GM23248 (cell line): ENCODE measurements at regions of chr7 and their contacts with region 1.

Region 1: DNA sequence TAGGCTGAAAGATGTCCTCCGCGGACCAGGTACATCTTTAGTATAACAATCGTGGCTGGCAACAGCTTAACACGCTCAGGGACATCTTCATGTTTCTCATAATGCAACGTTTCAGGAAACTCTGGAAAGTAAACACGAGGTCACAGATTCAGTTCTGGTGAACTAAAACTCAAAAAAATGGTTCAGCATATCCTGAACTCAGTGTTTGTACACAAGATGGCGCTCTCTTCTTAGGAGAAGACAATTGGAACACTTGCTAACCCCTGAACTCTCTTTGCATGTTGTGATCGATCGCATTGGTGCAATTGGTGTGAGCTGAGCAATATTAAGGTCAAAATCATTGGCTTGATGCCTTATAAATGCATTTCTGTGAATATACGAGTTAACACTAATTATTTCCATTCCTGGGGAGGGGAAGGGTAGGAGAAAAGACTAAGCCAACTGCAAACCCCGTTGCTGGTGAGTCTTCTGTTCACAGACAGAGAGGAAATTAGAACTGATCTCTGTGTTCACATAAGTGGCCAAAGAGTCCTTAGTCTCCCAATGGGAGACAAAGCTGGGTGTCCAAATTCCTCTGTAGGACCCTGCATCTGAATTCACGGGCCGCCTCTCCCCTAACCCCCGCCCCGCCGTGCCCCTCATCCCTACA is 52.6 kb upstream of the FAM180A start:
- DNase-seq: peak; percentile 83
- H3K4me3 ChIP-seq: 0 out of 2 replicates have a peak overlapping the region, but pooled peaks have one; percentile 31
- H3K27ac ChIP-seq: no peak overlapping the region
- H3K4me1 ChIP-seq: peaks cover 3% of the 10 kb centered on the region
- H3K27me3 ChIP-seq: no peaks in the 10 kb centered on the region

Region 2: DNA sequence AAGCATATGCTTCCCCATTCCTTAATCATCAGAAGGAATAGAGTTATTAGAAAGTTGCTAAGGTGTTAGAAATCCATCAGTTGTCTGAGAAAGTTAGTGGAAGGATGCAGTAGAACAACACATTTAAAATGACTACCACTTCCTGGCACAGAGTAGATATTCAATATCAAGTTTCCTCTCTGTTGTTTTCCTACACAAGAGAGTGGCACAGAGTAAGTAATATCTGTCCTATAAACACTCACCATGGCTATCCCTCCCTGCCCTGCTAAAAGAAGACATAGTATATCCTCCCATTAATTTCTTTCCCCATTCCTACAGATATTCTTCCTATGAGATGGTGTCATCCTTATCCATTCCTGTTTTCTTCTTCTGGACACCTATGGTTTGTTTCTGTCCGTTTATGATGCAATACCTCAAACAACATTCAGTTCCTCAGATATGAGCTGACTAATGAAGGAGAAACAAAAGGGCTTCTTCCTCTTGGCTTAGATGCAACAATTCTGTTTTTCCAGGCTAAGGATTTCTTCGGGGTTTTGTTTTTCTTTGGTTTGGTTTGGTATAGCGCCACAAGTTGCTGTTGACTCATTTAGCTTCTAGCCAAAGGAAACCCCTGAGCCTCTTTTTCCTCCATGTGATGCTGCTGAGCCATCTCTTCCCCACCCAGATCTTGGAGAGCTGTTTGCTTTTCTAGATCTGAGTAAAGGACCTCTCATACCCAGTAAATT is 1187.4 kb before region 1 on chr7:
- in situ Hi-C with region 1: no loop called
- DNase-seq: peak; percentile 97
- H3K4me3 ChIP-seq: peak overlapping the region; percentile 32
- H3K27ac ChIP-seq: peak overlapping the region; percentile 97
- H3K4me1 ChIP-seq: peaks cover 29% of the 10 kb centered on the region
- H3K27me3 ChIP-seq: no peaks in the 10 kb centered on the region

Region 3: GRCh38 chr7:135320277-135320676 is 480.9 kb before region 1 on chr7:
- in situ Hi-C with region 1: no loop called
- DNase-seq: peak; percentile 33
- H3K4me3 ChIP-seq: no peak overlapping the region
- H3K27ac ChIP-seq: no peak overlapping the region
- H3K4me1 ChIP-seq: no peaks in the 10 kb centered on the region
- H3K27me3 ChIP-seq: no peaks in the 10 kb centered on the region

Region 4: GRCh38 chr7:135597926-135598305 is 203.3 kb before region 1 on chr7:
- in situ Hi-C with region 1: no loop called
- DNase-seq: peak; percentile 58
- H3K4me3 ChIP-seq: no peak overlapping the region
- H3K27ac ChIP-seq: no peak overlapping the region
- H3K4me1 ChIP-seq: peaks cover 13% of the 10 kb centered on the region
- H3K27me3 ChIP-seq: no peaks in the 10 kb centered on the region

Region 5: GRCh38 chr7:136009488-136010079 is 208.4 kb after region 1 on chr7:
- in situ Hi-C with region 1: loop called (anchors 5 kb)
- DNase-seq: peak; percentile 74
- H3K4me3 ChIP-seq: no peak overlapping the region
- H3K27ac ChIP-seq: no peak overlapping the region
- H3K4me1 ChIP-seq: no peaks in the 10 kb centered on the region
- H3K27me3 ChIP-seq: no peaks in the 10 kb centered on the region